Activated CD4-positive, alpha-beta T cell treated with anti-CD3 and anti-CD28 coated beads, Interleukin-2, amount 10 ng/mL, durations not matched to agents 24 days and 14 days (primary cell): ENCODE measurements at regions of chr2 and their contacts with region 1.

Region 1: DNA sequence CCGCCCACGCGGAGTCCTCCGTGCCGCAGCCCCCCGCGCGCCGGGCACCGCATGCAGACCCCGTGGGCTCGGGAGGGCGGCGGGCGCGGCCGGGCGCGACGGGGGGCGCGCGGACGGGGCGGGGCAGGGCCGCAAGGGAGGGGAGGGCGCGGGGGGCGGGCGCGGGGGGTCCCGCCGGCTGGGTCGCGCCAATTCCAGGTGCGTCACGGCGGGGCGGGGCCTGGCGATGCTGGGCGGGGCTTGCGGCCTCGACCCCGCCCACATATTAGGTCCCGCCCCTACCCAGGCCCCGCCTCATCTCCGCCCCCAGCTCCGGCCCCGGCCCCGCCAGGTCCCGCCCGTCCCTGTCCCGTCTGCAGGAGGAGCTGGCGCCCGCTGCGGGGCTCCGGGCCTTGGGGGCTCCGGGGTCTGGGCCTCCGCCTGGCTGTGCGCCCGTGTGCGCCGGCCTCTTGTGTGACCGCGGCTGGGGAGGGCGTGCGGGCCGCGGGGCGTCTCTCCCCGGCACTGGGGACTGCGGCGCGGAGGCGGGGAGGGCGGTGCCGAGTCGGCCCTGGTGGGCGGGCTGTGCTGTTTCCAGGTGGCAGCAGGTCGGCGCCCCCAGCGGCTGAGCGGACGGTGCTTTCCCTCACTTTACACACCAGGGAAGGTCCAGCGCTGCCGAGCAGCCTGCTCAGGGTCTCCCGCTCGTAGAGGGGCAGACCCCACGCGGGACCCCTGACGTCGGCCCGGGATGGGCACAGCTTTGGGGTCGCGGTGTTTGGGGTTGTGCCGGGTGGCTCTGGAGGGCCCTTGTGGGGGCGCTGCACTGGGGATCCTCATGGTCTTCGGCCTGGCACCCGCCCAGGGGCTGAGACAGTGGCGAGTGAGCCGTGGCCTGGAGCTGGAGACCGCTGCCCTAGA is 543 bp downstream of the ING5 start:
- DNase-seq: peak; percentile 95
- H3K4me3 Mint-ChIP-seq: peak overlapping the region; percentile 91
- H3K27ac Mint-ChIP-seq: peak overlapping the region; percentile 79
- H3K4me1 Mint-ChIP-seq: peaks cover 15% of the 10 kb centered on the region
- H3K27me3 Mint-ChIP-seq: no peaks in the 10 kb centered on the region

Region 2: GRCh38 chr2:241355983-241356870 is 346.2 kb before region 1 on chr2 and contains the start of gene FARP2:
- intact Hi-C with region 1: loop called (anchors 1 kb)
- DNase-seq: peak; percentile 98
- H3K4me3 Mint-ChIP-seq: peak within 1 kb of the TSS; percentile 79
- H3K27ac Mint-ChIP-seq: peak within 1 kb of the TSS; percentile 76
- H3K4me1 Mint-ChIP-seq: peaks cover 33% of the 10 kb centered on the region
- H3K27me3 Mint-ChIP-seq: no peaks in the 10 kb centered on the region
- total RNA-seq, gene FARP2: 36.5 and 43.1 TPM in 2 replicates

Region 3: DNA sequence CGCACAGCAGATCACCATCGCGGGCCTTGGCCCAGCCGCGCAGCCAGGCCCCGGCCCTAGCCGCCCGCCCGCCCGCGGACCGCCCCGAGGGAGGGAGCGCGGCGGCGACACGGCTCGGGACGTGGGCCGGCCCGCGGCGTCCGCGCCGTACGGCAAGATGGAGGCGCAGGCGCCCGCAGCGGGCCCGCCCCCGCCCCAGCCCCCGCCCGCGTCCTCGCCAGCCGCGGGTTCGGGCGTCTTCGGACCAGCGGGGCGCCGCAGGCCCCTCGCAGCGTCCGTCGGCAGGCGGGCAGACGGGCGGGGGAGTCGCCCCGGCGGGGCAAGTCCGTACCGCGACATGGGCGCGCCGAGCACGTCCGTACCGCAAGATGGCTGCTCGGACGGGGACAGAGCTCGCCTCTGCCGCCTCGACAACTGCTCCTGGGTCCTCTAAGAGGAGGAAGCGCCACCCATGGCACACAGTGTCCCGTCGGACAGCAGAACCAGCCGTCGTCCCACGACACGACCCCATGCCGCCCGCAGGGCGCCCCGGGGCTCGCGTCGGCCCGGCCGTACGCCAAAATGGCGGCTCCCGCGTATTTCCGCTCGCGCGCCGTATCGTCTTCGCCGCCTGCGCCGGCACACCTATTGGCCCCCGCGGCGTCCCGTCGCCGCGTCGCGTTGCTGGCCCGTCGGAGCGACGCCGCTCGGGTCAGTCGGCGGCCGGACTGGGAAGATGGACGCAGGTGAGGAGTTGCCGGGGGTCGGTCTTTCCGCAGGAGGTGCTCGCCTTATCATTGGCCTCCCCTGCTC is 65.2 kb before region 1 on chr2 and contains the starts of genes ATG4B and THAP4:
- intact Hi-C with region 1: loop called (anchors 1 kb)
- DNase-seq: peak; percentile 95
- H3K4me3 Mint-ChIP-seq: peak within 1 kb of the TSS; percentile 89
- H3K27ac Mint-ChIP-seq: peak within 1 kb of the TSS; percentile 93
- H3K4me1 Mint-ChIP-seq: peaks cover 41% of the 10 kb centered on the region
- H3K27me3 Mint-ChIP-seq: no peaks in the 10 kb centered on the region
- total RNA-seq, gene ATG4B: 109 and 115 TPM in 2 replicates
- total RNA-seq, gene THAP4: 62.0 and 63.9 TPM in 2 replicates

Region 4: GRCh38 chr2:241673797-241674725 is 28.3 kb before region 1 on chr2:
- intact Hi-C with region 1: no loop called
- DNase-seq: no peak
- H3K4me3 Mint-ChIP-seq: no peak overlapping the region
- H3K27ac Mint-ChIP-seq: no peak overlapping the region
- H3K4me1 Mint-ChIP-seq: peaks cover 2% of the 10 kb centered on the region
- H3K27me3 Mint-ChIP-seq: no peaks in the 10 kb centered on the region

Region 5: GRCh38 chr2:241734467-241735208 is 32.3 kb after region 1 on chr2 and contains the start of gene D2HGDH:
- intact Hi-C with region 1: loop called (anchors 1 kb)
- DNase-seq: peak; percentile 98
- H3K4me3 Mint-ChIP-seq: peak within 1 kb of the TSS; percentile 83
- H3K27ac Mint-ChIP-seq: peak within 1 kb of the TSS; percentile 65
- H3K4me1 Mint-ChIP-seq: peaks cover 42% of the 10 kb centered on the region
- H3K27me3 Mint-ChIP-seq: no peaks in the 10 kb centered on the region
- total RNA-seq, gene D2HGDH: 34.2 and 40.4 TPM in 2 replicates

Region 6: DNA sequence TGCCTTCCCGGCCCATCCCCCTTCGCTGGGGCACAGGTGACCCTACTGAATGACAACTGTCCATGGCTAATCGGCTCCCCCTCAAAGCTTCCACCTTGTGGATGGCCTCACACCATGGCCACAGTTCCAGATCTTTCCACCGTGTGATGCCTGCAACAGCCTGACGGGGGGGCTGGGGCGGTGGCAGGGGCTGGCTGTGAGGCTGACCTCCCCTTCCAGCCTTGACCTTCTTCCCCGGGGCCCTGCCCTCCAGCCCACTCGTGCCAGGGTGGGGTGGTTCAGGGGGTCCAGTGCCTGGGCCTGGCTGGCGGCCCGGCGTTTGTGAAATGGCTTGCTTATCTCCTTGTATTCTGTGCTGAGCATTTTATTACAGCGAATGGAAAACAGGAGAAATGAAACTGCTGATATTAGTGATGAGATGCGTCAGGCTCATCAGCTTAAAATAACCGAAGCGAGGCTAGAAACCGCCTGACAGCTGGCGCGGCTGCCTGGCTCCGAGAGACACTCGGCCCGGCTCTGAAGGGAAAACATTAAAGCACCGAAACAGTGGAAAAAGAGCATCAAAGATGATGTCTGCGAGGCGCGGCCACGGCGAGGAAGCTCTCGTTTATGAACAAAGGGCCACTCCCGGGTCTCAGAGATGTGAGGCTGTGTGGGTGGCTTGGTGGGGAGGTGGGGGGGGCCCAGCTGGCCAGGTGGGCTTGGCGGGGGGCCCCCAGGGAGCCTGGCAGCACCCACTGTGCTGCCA is 157.2 kb after region 1 on chr2:
- intact Hi-C with region 1: loop called (anchors 5 kb)
- DNase-seq: peak; percentile 86
- H3K4me3 Mint-ChIP-seq: peak overlapping the region; percentile 89
- H3K27ac Mint-ChIP-seq: peak overlapping the region; percentile 91
- H3K4me1 Mint-ChIP-seq: peaks cover 55% of the 10 kb centered on the region
- H3K27me3 Mint-ChIP-seq: peaks cover 5% of the 10 kb centered on the region

Region 7: GRCh38 chr2:241908686-241909420 is 206.5 kb after region 1 on chr2:
- intact Hi-C with region 1: no loop called
- DNase-seq: no peak
- H3K4me3 Mint-ChIP-seq: no peak overlapping the region
- H3K27ac Mint-ChIP-seq: no peak overlapping the region
- H3K4me1 Mint-ChIP-seq: peaks cover 2% of the 10 kb centered on the region
- H3K27me3 Mint-ChIP-seq: no peaks in the 10 kb centered on the region